Caco-2 (cell line): ENCODE measurements at regions of chr9 and their contacts with region 1.

Region 1: GRCh38 chr9:4762108-4762885 is 21.3 kb upstream of the AK3 start:
- DNase-seq: peak; percentile 55 to 70
- H3K4me3 ChIP-seq: no peak overlapping the region
- H3K4me3 Mint-ChIP-seq: peak overlapping the region; percentile 25
- H3K27ac Mint-ChIP-seq: no peak overlapping the region
- H3K4me1 ChIP-seq: 0 out of 2 replicates have a peak, but pooled peaks cover 3% of the 10 kb centered on the region
- H3K4me1 Mint-ChIP-seq: no peaks in the 10 kb centered on the region
- H3K27me3 ChIP-seq: no peaks in the 10 kb centered on the region
- H3K27me3 Mint-ChIP-seq: peaks cover 10% of the 10 kb centered on the region
- CTCF ChIP-seq: peak; percentile 65 to 78

Region 2: DNA sequence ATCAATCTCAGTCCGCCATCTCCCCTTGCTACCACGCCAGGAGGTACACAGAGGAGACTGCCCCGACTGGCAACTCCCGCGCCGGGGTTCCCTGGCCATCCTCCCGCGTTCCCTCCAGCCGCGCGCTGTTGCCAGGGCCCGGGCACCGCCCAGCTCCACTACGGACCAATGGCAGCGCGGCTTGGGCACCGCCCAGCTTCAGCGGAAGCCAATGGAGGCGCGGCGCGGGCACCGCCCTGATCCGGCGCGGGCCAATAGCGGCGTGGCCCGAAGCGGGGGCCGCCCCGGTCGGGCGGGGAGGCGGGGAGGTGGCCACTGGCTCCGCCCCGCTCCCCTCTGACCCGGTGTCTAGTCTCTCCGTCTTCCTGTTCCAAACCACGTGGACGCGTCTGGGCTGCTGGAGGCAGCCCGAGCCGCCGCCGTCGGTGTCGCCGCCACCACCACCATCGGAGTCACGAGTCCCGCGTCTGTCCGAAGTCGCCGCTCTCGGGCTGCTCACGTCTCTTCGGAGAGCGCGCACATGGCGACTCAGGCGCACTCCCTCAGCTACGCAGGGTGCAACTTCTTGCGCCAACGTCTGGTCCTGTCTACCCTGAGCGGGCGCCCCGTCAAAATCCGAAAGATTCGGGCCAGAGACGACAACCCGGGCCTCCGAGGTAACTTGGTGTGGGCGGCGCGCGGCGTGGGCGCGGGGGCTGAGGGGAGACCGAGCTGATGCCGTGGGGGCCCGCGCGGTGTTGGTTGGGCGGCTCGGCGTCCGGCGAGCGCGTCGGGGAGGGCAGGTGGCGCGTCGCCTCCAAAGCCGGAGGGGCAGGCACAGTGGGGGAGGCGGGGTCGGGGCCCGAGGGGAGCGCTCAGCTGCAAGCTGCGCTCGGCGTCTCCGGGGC is 30.5 kb after region 1 on chr9 and contains the start of gene RCL1:
- CTCF ChIA-PET with region 1: no interaction called
- POLR2A ChIA-PET with region 1: interaction called, 4 read pairs
- intact Hi-C with region 1: loop called (anchors 2 kb)
- DNase-seq: peak; percentile 92 to 96
- H3K4me3 ChIP-seq: peak within 1 kb of the TSS; percentile 91
- H3K4me3 Mint-ChIP-seq: peak within 1 kb of the TSS; percentile 98
- H3K27ac Mint-ChIP-seq: peak within 1 kb of the TSS; percentile 91
- H3K4me1 ChIP-seq: no peaks in the 10 kb centered on the region
- H3K4me1 Mint-ChIP-seq: peaks cover 6% of the 10 kb centered on the region
- H3K27me3 ChIP-seq: no peaks in the 10 kb centered on the region
- H3K27me3 Mint-ChIP-seq: peaks cover 2% of the 10 kb centered on the region
- CTCF ChIP-seq: no peak
- total RNA-seq, gene RCL1: 15.1 and 15.7 TPM in 2 replicates

Region 3: GRCh38 chr9:4805191-4805918 is 43.1 kb after region 1 on chr9:
- CTCF ChIA-PET with region 1: no interaction called
- POLR2A ChIA-PET with region 1: no interaction called
- intact Hi-C with region 1: loop called (anchors 1 kb)
- DNase-seq: no peak
- H3K4me3 ChIP-seq: no peak overlapping the region
- H3K4me3 Mint-ChIP-seq: no peak overlapping the region
- H3K27ac Mint-ChIP-seq: no peak overlapping the region
- H3K4me1 ChIP-seq: no peaks in the 10 kb centered on the region
- H3K4me1 Mint-ChIP-seq: no peaks in the 10 kb centered on the region
- H3K27me3 ChIP-seq: no peaks in the 10 kb centered on the region
- H3K27me3 Mint-ChIP-seq: no peaks in the 10 kb centered on the region
- CTCF ChIP-seq: no peak

Region 4: GRCh38 chr9:4923580-4924544 is 161.6 kb after region 1 on chr9:
- CTCF ChIA-PET with region 1: interaction called, 4 read pairs
- POLR2A ChIA-PET with region 1: no interaction called
- intact Hi-C with region 1: loop called (anchors 1 kb)
- DNase-seq: peak in 1 of 2 experiments; percentile 19
- H3K4me3 ChIP-seq: no peak overlapping the region
- H3K4me3 Mint-ChIP-seq: no peak overlapping the region
- H3K27ac Mint-ChIP-seq: no peak overlapping the region
- H3K4me1 ChIP-seq: no peaks in the 10 kb centered on the region
- H3K4me1 Mint-ChIP-seq: no peaks in the 10 kb centered on the region
- H3K27me3 ChIP-seq: no peaks in the 10 kb centered on the region
- H3K27me3 Mint-ChIP-seq: peaks cover 3% of the 10 kb centered on the region
- CTCF ChIP-seq: peak; percentile 32 to 48

Region 5: GRCh38 chr9:4984621-4985385 is 222.5 kb after region 1 on chr9 and contains the start of gene JAK2:
- CTCF ChIA-PET with region 1: interaction called, 4 read pairs
- POLR2A ChIA-PET with region 1: interaction called, 3 read pairs
- intact Hi-C with region 1: loop called (anchors 1 kb)
- DNase-seq: peak; percentile 89 to 90
- H3K4me3 ChIP-seq: peak within 1 kb of the TSS; percentile 63
- H3K4me3 Mint-ChIP-seq: peak within 1 kb of the TSS; percentile 76
- H3K27ac Mint-ChIP-seq: peak within 1 kb of the TSS; percentile 87
- H3K4me1 ChIP-seq: peaks cover 3% of the 10 kb centered on the region; the same call in 1 of the 2 replicates
- H3K4me1 Mint-ChIP-seq: peaks cover 15% of the 10 kb centered on the region
- H3K27me3 ChIP-seq: no peaks in the 10 kb centered on the region
- H3K27me3 Mint-ChIP-seq: peaks cover 5% of the 10 kb centered on the region
- CTCF ChIP-seq: peak; percentile 18 to 28
- total RNA-seq, gene JAK2: 0.86 and 1.4 TPM in 2 replicates